Left ventricle myocardium inferior (tissue), 1 donor: ENCODE measurements at regions of chr5 and their contacts with region 1.

Region 1: DNA sequence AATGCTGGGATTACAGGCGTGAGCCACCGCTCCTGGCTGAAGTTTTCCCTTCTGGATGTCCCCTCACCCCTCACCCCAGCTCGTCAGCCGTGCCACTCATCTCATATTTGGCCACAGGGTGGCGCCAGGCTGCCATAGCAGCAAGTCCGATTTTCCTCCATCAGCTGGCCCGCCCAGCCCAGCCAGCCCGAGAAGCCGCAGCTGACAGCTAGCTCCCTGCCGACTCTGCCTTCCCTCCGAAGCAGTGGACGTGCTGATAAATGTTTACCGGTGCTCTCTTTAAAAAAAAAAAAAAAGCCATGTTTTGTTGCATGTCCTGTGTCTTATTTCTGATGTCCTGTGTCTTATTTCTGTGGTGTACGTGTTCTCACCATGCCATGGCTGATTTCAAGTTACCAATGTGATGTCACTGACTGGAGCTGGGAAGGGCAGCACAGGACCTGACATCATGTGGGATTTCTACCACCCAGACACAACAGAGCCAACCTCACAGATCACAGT is 58.3 kb downstream of the PFDN1 start:
- DNase-seq: peak; percentile 91
- H3K4me3 ChIP-seq: peak overlapping the region; percentile 12
- H3K27ac ChIP-seq: peak overlapping the region; percentile 92
- H3K4me1 ChIP-seq: peaks cover 95% of the 10 kb centered on the region
- H3K27me3 ChIP-seq: no peaks in the 10 kb centered on the region
- CTCF ChIP-seq: peak; percentile 93

Region 2: DNA sequence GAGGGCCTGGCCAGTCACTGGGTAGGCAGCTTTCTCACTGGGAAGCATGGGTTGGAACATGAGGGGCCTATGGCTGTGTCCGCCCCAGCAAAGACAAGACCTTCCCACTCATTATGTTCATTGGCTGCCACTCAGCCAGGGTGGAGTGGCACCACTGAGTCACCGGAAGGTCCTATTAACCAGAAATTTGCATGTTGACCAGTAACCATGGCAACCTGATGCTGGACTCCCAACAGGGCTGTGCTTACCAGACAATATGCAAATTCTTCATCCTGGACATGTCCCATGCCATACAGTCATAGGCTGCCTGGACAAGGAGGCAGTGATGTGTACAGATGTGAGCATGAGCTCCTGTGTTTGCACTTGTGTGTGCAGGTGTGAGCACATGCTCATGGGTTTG is 382.3 kb before region 1 on chr5:
- intact Hi-C with region 1: no loop called
- DNase-seq: no peak
- H3K4me3 ChIP-seq: no peak overlapping the region
- H3K27ac ChIP-seq: no peak overlapping the region
- H3K4me1 ChIP-seq: peaks cover 14% of the 10 kb centered on the region
- H3K27me3 ChIP-seq: no peaks in the 10 kb centered on the region
- CTCF ChIP-seq: no peak

Region 3: DNA sequence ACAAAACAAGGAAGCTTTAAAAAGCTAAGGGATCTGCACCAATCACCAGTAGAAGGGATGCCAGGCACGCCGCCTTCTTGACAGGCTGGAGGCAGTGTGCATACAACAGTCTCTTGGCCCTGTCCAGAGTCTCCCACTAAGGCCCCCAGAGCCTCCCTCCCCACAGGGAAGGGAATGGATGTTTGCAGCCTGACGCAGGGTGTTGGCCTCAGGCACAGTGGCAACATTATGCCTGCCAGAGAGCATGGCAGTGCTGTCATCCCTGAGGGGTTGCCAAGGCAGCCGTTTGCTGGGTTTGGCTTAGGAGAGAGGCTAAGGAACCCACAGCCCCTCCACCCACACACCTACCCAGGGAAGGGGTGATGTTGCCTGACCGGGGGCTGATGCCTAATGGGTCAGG is 97.0 kb after region 1 on chr5:
- intact Hi-C with region 1: no loop called
- DNase-seq: peak; percentile 68
- H3K4me3 ChIP-seq: peak overlapping the region; percentile 75
- H3K27ac ChIP-seq: peak overlapping the region; percentile 92
- H3K4me1 ChIP-seq: peaks cover 98% of the 10 kb centered on the region
- H3K27me3 ChIP-seq: no peaks in the 10 kb centered on the region
- CTCF ChIP-seq: no peak

Region 4: GRCh38 chr5:140351609-140352334 is 107.2 kb after region 1 on chr5:
- intact Hi-C with region 1: loop called (anchors 5 kb)
- DNase-seq: no peak
- H3K4me3 ChIP-seq: no peak overlapping the region
- H3K27ac ChIP-seq: no peak overlapping the region
- H3K4me1 ChIP-seq: peaks cover 22% of the 10 kb centered on the region
- H3K27me3 ChIP-seq: no peaks in the 10 kb centered on the region
- CTCF ChIP-seq: peak; percentile 92